Breast epithelium (tissue), 4 donors: ENCODE measurements at regions of chr11 and their contacts with region 1.

Region 1: DNA sequence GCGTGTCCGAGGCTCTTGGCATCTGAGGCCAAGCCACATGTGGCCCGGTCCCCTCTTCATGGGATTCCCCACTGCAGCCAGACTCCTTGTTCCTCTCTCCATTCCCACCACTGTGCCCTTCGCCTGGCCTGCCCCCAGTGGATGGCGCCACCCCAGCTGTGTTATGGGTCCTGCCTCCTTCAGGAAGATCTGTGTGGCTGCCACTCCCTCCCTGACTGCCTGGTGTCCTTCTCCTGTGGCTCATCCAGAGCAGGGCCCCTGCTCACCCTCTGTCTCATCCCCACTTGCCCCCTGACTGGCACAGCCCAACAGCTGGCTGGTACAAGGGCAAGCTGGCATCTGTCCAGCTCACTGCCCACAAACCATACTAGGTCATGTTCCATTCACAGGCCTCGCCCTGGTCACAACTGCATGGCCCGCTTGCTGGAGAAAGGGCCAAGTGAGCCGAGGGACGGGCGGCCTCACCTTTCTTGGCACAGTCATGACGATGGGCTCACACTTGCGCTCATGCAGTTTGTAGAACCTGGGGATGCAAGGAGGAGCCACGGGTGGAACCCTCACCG is 1.9 kb upstream of the PTPRCAP start:
- DNase-seq: no peak
- H3K4me3 ChIP-seq: no peak overlapping the region
- H3K27ac ChIP-seq: peak overlapping the region; percentile 29 to 61
- H3K4me1 ChIP-seq: peaks cover 0 to 12% of the 10 kb centered on the region in 2 donors
- H3K27me3 ChIP-seq: no peaks in the 10 kb centered on the region
- CTCF ChIP-seq: no peak
- POLR2A ChIP-seq: no peak

Region 2: GRCh38 chr11:66207876-66208275 is 1231.5 kb before region 1 on chr11:
- intact Hi-C with region 1: loop called (anchors 5 kb)
- DNase-seq: no peak
- H3K4me3 ChIP-seq: no peak overlapping the region
- H3K27ac ChIP-seq: no peak overlapping the region
- H3K4me1 ChIP-seq: no peaks in the 10 kb centered on the region
- H3K27me3 ChIP-seq: no peaks in the 10 kb centered on the region
- CTCF ChIP-seq: no peak
- POLR2A ChIP-seq: no peak

Region 3: GRCh38 chr11:67252831-67253239 is 186.6 kb before region 1 on chr11:
- intact Hi-C with region 1: no loop called
- DNase-seq: no peak
- H3K4me3 ChIP-seq: no peak overlapping the region
- H3K27ac ChIP-seq: peak overlapping the region; percentile 64 to 74
- H3K4me1 ChIP-seq: peaks cover 17 to 44% of the 10 kb centered on the region in 2 donors
- H3K27me3 ChIP-seq: no peaks in the 10 kb centered on the region
- CTCF ChIP-seq: peak in 2 of 3 donors; percentile 26 to 30
- POLR2A ChIP-seq: no peak